ENCODE measurements at regions of chr5 and their contacts with region 1.

Region 1: GRCh38 chr5:42057254-42057690 is 132.2 kb downstream of the FBXO4 start:
- DNase-seq: peak; percentile 26 to 69 (median 53)
- ATAC-seq: peak; percentile 84
- H3K4me3 ChIP-seq: no peak overlapping the region
- H3K4me3 Mint-ChIP-seq: no peak overlapping the region
- H3K27ac ChIP-seq: no peak overlapping the region
- H3K27ac Mint-ChIP-seq: no peak overlapping the region
- H3K4me1 ChIP-seq: no peaks in the 10 kb centered on the region
- H3K4me1 Mint-ChIP-seq: no peaks in the 10 kb centered on the region
- H3K27me3 ChIP-seq: no peaks in the 10 kb centered on the region
- H3K27me3 Mint-ChIP-seq: peaks cover 10% of the 10 kb centered on the region
- CTCF ChIP-seq: peak; percentile 64

Region 2: DNA sequence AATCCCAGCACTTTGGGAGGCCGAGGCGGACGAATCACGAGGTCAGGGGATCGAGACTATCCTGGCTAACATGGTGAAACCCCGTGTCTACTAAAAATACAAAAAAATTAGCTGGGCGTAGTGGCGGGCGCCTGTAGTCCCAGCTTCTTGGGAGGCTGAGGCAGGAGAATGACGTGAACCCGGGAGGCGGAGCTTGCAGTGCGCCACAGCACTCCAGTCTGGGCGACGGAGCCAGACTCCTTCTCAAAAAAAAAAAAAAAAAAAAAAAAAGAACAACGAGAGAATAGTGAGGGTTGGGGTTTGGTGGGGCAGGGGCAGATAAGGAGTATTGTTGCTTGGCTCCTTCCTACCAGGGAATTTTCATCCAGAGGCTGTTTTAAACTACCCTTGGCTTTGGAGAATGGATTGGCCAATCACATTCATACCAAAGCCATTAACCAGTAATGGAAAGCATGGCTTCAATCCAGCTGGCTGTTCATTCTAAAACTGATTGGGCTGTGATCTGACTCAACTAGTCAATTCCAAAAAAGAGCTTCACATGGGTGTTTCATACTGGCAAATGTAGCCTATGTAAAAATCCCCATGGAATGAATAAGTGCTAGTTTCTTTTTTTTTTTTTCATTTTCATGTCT is 611.2 kb before region 1 on chr5:
- CTCF ChIA-PET with region 1: no interaction called
- POLR2A ChIA-PET with region 1: no interaction called
- intact Hi-C with region 1: no loop called
- DNase-seq: no peak
- ATAC-seq: no peak
- H3K4me3 ChIP-seq: no peak overlapping the region
- H3K4me3 Mint-ChIP-seq: no peak overlapping the region
- H3K27ac ChIP-seq: no peak overlapping the region
- H3K27ac Mint-ChIP-seq: no peak overlapping the region
- H3K4me1 ChIP-seq: no peaks in the 10 kb centered on the region
- H3K4me1 Mint-ChIP-seq: no peaks in the 10 kb centered on the region
- H3K27me3 ChIP-seq: no peaks in the 10 kb centered on the region
- H3K27me3 Mint-ChIP-seq: no peaks in the 10 kb centered on the region
- CTCF ChIP-seq: no peak

Region 3: GRCh38 chr5:41924872-41925554 is 132.3 kb before region 1 on chr5 and contains the start of gene FBXO4:
- CTCF ChIA-PET with region 1: no interaction called
- POLR2A ChIA-PET with region 1: no interaction called
- intact Hi-C with region 1: loop called (anchors 5 to 10 kb)
- DNase-seq: peak; percentile 79 to 96 (median 88)
- ATAC-seq: peak; percentile 96
- H3K4me3 ChIP-seq: peak within 1 kb of the TSS; percentile 79 to 87
- H3K4me3 Mint-ChIP-seq: peak within 1 kb of the TSS; percentile 87
- H3K27ac ChIP-seq: peak within 1 kb of the TSS; percentile 91 to 98
- H3K27ac Mint-ChIP-seq: peak within 1 kb of the TSS; percentile 99
- H3K4me1 ChIP-seq: peaks cover 16% of the 10 kb centered on the region
- H3K4me1 Mint-ChIP-seq: peaks cover 28% of the 10 kb centered on the region
- H3K27me3 ChIP-seq: no peaks in the 10 kb centered on the region
- H3K27me3 Mint-ChIP-seq: no peaks in the 10 kb centered on the region
- CTCF ChIP-seq: peak; percentile 57
- total RNA-seq, gene FBXO4: 4.4 to 4.7 TPM

Region 4: DNA sequence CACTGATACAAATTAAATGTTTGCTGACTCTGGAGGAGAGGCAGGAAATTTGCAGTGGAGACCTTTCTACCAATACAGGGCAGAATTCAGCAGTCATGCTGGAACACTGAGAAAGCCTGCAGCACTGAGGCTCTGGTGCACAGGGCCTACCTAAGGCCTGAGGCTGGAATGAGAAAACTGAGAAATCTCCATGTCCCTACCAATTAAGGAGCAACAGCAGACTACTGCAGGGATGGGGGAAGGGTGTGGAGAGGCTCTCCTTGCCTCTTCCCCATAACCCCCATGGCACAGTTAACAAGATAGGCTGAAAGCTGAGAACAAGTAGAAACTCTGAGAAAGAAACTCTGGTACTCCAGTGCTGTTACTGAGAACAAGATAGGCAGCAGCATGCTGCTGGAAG is 121.7 kb before region 1 on chr5:
- CTCF ChIA-PET with region 1: interaction called, 5 read pairs
- POLR2A ChIA-PET with region 1: no interaction called
- intact Hi-C with region 1: loop called in 1 of 2 experiments (anchors 10 kb)
- DNase-seq: no peak
- ATAC-seq: no peak
- H3K4me3 ChIP-seq: no peak overlapping the region
- H3K4me3 Mint-ChIP-seq: no peak overlapping the region
- H3K27ac ChIP-seq: no peak overlapping the region
- H3K27ac Mint-ChIP-seq: no peak overlapping the region
- H3K4me1 ChIP-seq: no peaks in the 10 kb centered on the region
- H3K4me1 Mint-ChIP-seq: no peaks in the 10 kb centered on the region
- H3K27me3 ChIP-seq: no peaks in the 10 kb centered on the region
- H3K27me3 Mint-ChIP-seq: no peaks in the 10 kb centered on the region
- CTCF ChIP-seq: no peak

Region 5: DNA sequence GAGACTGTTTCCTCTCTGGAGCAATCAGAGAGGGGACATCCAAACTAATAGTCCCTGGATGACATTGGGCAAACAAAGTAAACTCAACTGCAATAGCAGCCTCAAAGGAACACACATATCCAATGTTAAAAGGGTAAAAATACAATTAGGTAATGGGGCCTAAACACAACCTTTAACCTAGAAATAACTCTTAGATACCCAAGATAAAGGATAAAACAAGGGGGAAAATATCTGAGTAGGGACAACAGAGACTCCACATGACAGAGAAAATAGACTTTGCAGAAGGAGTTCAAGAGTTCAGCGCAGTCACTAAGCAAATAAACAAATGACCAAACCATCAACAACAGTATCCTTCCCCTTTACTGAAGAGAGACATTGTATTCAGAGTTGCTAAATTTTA is 17.1 kb after region 1 on chr5:
- CTCF ChIA-PET with region 1: interaction called, 11 read pairs
- POLR2A ChIA-PET with region 1: no interaction called
- intact Hi-C with region 1: no loop called
- DNase-seq: no peak
- ATAC-seq: no peak
- H3K4me3 ChIP-seq: no peak overlapping the region
- H3K4me3 Mint-ChIP-seq: no peak overlapping the region
- H3K27ac ChIP-seq: no peak overlapping the region
- H3K27ac Mint-ChIP-seq: no peak overlapping the region
- H3K4me1 ChIP-seq: no peaks in the 10 kb centered on the region
- H3K4me1 Mint-ChIP-seq: no peaks in the 10 kb centered on the region
- H3K27me3 ChIP-seq: no peaks in the 10 kb centered on the region
- H3K27me3 Mint-ChIP-seq: peaks cover 11% of the 10 kb centered on the region
- CTCF ChIP-seq: no peak

Measured in CD8-positive, alpha-beta T cell (primary cell).